PC-9 (cell line): ENCODE measurements at regions of chr3 and their contacts with region 1.

Region 1: DNA sequence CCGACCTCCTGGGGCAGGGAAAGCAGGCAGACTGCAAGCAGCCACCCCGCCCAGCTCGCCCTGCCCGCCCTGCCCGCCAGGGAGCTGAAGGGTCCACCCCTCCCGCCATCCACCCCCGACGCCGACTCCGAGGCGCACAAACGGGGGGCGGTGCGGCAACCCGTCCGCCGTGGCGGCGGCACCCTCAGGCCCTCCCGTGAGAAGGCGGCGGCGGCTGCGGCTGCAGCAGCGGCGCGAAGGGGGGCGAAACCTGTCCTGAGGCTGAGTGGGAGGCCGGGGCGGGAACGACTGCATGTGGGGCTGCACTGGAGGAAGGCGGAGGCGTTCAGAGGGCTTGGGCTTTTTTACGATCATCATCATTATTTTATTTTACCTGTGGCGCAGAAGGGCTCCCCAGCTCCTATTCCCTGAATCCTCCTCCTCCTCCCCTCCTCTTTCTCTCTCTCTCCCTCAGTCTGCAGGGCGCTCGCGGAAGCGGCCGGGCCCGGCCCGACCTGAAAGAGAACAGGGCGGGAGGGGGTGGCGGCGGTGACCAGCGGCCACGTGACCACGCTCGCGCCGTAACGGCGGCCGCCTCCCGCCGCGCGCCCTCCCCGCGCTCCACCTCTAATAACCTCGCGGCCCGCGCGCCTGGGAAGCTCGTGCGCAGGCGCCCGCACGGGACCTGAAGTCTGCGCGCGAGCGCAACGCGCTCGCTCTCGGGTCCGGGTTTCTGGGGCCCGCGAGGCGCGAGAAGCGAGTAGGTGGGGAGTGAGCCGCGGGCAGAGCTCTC is at the start of gene TBC1D5:
- DNase-seq: peak; percentile 85 to 97
- H3K4me3 ChIP-seq: peak within 1 kb of the TSS; percentile 70
- H3K27ac ChIP-seq: peak within 1 kb of the TSS; percentile 95
- H3K4me1 ChIP-seq: peaks cover 30% of the 10 kb centered on the region
- H3K27me3 ChIP-seq: no peaks in the 10 kb centered on the region
- CTCF ChIP-seq: no peak; the same call in 1 of the 2 replicates
- total RNA-seq, gene TBC1D5: 41.2 and 54.0 TPM in 2 replicates

Region 2: DNA sequence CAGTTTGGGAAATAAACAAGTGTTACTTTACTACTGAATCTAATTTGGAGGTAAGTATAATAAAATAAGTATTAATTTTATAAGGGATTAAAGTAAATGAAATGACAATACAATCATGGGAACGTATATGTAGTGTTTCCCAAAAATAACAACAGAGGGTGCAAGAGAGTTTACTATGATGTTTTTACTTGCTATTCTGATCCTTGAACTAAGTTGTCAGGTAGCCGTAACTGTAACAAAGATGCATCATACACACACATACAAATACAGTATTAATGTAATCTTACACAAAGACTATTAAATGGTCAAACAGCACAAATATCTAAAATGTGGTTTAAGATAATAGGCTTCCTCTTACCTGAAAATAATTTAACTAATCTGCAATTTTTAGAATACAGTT is 311.3 kb before region 1 on chr3:
- CTCF ChIA-PET with region 1: no interaction called
- POLR2A ChIA-PET with region 1: no interaction called
- intact Hi-C with region 1: loop called (anchors 5 kb)
- DNase-seq: no peak
- H3K4me3 ChIP-seq: no peak overlapping the region
- H3K27ac ChIP-seq: no peak overlapping the region
- H3K4me1 ChIP-seq: peaks cover 13% of the 10 kb centered on the region
- H3K27me3 ChIP-seq: no peaks in the 10 kb centered on the region
- CTCF ChIP-seq: peak; percentile 70

Region 3: DNA sequence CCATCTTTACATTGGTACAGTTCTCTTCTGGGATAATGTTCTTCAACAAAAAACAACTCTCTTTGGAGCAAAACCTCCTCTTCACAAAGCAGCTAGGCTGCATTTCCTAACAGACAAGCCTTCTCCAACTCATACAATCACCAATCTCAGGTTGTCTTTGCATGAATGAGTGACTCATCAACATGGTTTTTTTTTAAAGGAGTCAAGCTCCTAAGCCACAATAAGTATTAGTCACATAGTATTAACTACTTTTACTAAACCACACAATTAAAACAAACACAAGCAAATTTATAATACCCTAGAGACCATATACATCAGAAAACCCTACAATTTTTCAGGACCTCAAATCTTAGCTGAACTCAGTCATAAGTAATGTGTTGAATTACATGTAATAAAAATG is 137.3 kb before region 1 on chr3:
- CTCF ChIA-PET with region 1: no interaction called
- POLR2A ChIA-PET with region 1: interaction called, 10 read pairs
- intact Hi-C with region 1: no loop called
- DNase-seq: peak; percentile 6 to 77
- H3K4me3 ChIP-seq: no peak overlapping the region
- H3K27ac ChIP-seq: no peak overlapping the region
- H3K4me1 ChIP-seq: peaks cover 14% of the 10 kb centered on the region
- H3K27me3 ChIP-seq: no peaks in the 10 kb centered on the region
- CTCF ChIP-seq: no peak

Region 4: GRCh38 chr3:17717411-17717810 is 24.9 kb before region 1 on chr3:
- CTCF ChIA-PET with region 1: interaction called, 4 read pairs
- POLR2A ChIA-PET with region 1: interaction called, 29 read pairs
- intact Hi-C with region 1: no loop called
- DNase-seq: no peak
- H3K4me3 ChIP-seq: no peak overlapping the region
- H3K27ac ChIP-seq: no peak overlapping the region
- H3K4me1 ChIP-seq: no peaks in the 10 kb centered on the region
- H3K27me3 ChIP-seq: no peaks in the 10 kb centered on the region
- CTCF ChIP-seq: no peak

Region 5: GRCh38 chr3:17882981-17883380 is 140.7 kb after region 1 on chr3:
- CTCF ChIA-PET with region 1: no interaction called
- POLR2A ChIA-PET with region 1: no interaction called
- intact Hi-C with region 1: no loop called
- DNase-seq: no peak
- H3K4me3 ChIP-seq: no peak overlapping the region
- H3K27ac ChIP-seq: no peak overlapping the region
- H3K4me1 ChIP-seq: no peaks in the 10 kb centered on the region
- H3K27me3 ChIP-seq: no peaks in the 10 kb centered on the region
- CTCF ChIP-seq: no peak

Region 6: DNA sequence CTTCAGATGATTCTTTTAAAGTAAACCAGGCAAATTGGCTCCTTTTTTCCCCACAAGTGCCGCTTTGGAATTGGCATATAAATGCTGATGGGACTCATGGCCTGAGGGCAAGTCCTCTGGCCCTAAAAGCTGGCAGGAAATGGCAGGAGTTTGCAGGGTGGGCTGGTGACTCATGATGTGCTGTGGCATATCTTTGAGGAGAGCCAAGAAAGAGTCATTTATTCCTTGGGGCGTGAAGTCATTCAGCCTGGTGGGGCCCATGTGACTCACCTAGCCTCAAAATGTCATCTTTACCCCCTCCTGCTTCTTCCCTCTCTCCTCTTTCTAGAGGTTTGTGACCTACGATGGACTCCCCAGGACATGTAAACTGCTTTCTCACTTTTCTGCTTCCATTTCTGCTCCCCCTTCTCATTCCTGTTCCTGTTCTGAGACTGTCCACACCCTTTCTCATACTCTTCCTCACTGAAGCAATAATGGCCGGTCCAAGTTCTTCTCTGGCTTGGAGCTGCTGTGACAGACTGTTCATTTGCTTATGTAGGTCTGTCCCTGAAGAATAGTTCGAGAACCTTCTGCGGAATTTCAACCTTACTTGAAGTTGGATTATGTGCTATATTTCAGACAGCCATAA is 356.8 kb after region 1 on chr3:
- CTCF ChIA-PET with region 1: no interaction called
- POLR2A ChIA-PET with region 1: no interaction called
- intact Hi-C with region 1: loop called (anchors 5 kb)
- DNase-seq: peak; percentile 84 to 88
- H3K4me3 ChIP-seq: 0 out of 2 replicates have a peak overlapping the region, but pooled peaks have one; percentile 18
- H3K27ac ChIP-seq: peak overlapping the region; percentile 79
- H3K4me1 ChIP-seq: peaks cover 40% of the 10 kb centered on the region
- H3K27me3 ChIP-seq: no peaks in the 10 kb centered on the region
- CTCF ChIP-seq: no peak

Region 7: DNA sequence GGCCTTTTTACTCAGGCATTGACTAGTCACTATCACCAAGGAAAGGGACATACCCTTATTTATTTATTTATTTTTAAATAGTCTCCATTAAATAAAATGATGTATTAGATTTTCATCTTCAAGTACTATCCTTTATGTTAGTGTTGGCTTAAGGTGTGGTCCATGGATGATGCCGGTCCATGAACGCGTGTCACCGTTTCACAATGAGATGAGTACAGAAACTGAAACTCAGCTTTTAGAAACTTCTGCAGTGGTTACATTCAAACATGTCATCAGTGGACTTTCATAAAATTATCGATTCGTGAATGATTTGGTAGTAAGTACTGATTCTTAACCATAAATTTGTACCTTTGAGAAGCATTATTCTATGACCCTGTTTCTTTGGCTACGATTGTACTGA is 516.2 kb after region 1 on chr3:
- CTCF ChIA-PET with region 1: no interaction called
- POLR2A ChIA-PET with region 1: no interaction called
- intact Hi-C with region 1: no loop called
- DNase-seq: no peak
- H3K4me3 ChIP-seq: no peak overlapping the region
- H3K27ac ChIP-seq: no peak overlapping the region
- H3K4me1 ChIP-seq: no peaks in the 10 kb centered on the region
- H3K27me3 ChIP-seq: no peaks in the 10 kb centered on the region
- CTCF ChIP-seq: no peak